ENCODE measurements at regions of chr1 and their contacts with region 1.

Region 1: DNA sequence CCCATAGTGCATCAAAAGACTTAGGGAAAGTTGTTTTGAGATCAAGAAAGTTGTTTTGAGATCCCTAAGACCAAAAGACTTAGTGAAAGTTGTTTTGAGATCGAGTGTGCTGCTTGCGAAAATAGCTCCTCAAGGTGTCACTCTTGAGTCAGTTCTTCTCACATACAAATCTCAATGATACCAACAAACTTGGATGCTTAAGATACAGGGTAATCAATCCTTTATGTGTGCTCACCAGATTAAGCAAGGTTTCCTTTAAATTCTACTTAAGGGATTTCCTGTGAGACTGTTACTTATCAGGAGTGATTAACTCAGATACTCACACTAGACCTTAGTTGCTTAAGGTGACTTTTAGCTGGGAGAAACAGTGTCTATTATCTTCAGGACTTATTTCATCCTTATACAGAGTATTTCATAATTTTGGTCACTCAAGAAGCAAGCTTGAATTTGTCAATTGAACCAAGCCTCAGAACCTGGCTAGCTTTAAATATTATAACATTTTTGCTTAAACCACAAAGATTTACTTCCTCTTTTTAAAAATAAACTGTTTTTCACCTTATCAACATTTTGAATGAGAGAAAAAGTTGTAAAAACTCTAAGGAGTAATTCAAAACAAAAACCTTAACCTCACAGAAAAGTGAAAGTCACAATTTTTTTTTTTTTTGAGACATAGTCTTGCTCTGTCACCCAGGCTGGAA is 8.0 kb upstream of the RLF start:
- DNase-seq: peak; percentile 48
- ATAC-seq: peak; percentile 86
- H3K4me3 Mint-ChIP-seq: no peak overlapping the region
- H3K27ac Mint-ChIP-seq: no peak overlapping the region
- H3K4me1 Mint-ChIP-seq: peaks cover 11% of the 10 kb centered on the region
- H3K27me3 Mint-ChIP-seq: peaks cover 4% of the 10 kb centered on the region

Region 2: GRCh38 chr1:40096977-40097782 is 56.0 kb before region 1 on chr1 and contains the start of gene PPT1:
- CTCF ChIA-PET with region 1: interaction called, 10 read pairs
- DNase-seq: peak; percentile 87
- ATAC-seq: peak; percentile 95
- H3K4me3 Mint-ChIP-seq: peak within 1 kb of the TSS; percentile 84
- H3K27ac Mint-ChIP-seq: peak within 1 kb of the TSS; percentile 89
- H3K4me1 Mint-ChIP-seq: peaks cover 38% of the 10 kb centered on the region
- H3K27me3 Mint-ChIP-seq: peaks cover 7% of the 10 kb centered on the region
- total RNA-seq, gene PPT1: 74.1 to 96.6 TPM

Region 3: DNA sequence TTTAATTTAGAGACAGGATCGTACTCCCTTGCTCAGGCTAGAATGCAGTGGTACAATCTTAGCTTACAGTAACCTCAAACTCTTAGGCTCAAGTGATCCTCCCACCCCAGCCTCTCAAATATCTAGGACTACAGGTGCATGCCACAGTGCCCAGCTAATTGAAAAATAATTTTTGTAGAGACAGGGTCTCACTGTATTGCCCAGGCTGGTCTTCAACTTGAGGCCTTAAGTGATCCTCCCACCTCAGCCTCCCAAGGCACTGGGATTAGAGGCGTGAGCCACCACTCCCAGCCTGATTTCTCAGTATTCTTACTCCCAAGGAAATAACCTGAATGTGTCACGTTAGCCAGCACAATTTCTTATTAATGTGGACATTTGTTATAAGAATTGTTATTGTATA is 17.8 kb after region 1 on chr1:
- CTCF ChIA-PET with region 1: interaction called, 12 read pairs
- DNase-seq: no peak
- ATAC-seq: no peak
- H3K4me3 Mint-ChIP-seq: no peak overlapping the region
- H3K27ac Mint-ChIP-seq: no peak overlapping the region
- H3K4me1 Mint-ChIP-seq: peaks cover 28% of the 10 kb centered on the region
- H3K27me3 Mint-ChIP-seq: no peaks in the 10 kb centered on the region

Region 4: GRCh38 chr1:40185951-40186864 is 33.0 kb after region 1 on chr1:
- CTCF ChIA-PET with region 1: interaction called, 10 read pairs
- DNase-seq: peak; percentile 81
- ATAC-seq: peak; percentile 97
- H3K4me3 Mint-ChIP-seq: peak overlapping the region; percentile 39
- H3K27ac Mint-ChIP-seq: peak overlapping the region; percentile 88
- H3K4me1 Mint-ChIP-seq: peaks cover 60% of the 10 kb centered on the region
- H3K27me3 Mint-ChIP-seq: no peaks in the 10 kb centered on the region

Region 5: GRCh38 chr1:40241362-40241761 is 88.1 kb after region 1 on chr1:
- CTCF ChIA-PET with region 1: interaction called, 10 read pairs
- DNase-seq: no peak
- ATAC-seq: peak; percentile 31
- H3K4me3 Mint-ChIP-seq: peak overlapping the region; percentile 8
- H3K27ac Mint-ChIP-seq: peak overlapping the region; percentile 83
- H3K4me1 Mint-ChIP-seq: peaks cover 55% of the 10 kb centered on the region
- H3K27me3 Mint-ChIP-seq: no peaks in the 10 kb centered on the region

Region 6: DNA sequence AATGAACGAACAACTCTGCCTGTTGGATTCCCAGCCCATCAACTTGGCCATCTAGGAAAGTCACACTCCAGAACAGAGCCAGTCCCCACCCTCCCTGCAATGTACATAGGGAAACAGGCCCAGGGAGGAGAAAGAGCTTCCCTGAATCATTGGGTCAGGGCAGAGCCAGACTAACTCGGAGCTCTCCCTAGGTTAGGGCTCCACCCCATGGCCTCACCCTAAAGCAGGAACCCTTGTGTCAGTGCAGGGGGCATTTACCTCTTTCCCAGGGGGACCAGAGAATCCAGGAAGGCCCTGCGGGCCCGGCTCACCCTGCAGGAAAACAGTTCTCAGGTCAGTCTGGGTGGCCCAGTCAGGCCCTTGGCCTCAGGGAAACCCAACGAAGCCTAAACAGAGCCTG is 152.2 kb after region 1 on chr1:
- CTCF ChIA-PET with region 1: interaction called, 16 read pairs
- DNase-seq: peak; percentile 47
- ATAC-seq: peak; percentile 49
- H3K4me3 Mint-ChIP-seq: no peak overlapping the region
- H3K27ac Mint-ChIP-seq: no peak overlapping the region
- H3K4me1 Mint-ChIP-seq: no peaks in the 10 kb centered on the region
- H3K27me3 Mint-ChIP-seq: no peaks in the 10 kb centered on the region

Region 7: GRCh38 chr1:40404670-40405462 is 251.6 kb after region 1 on chr1:
- CTCF ChIA-PET with region 1: interaction called, 11 read pairs
- DNase-seq: no peak
- ATAC-seq: peak; percentile 50
- H3K4me3 Mint-ChIP-seq: peak overlapping the region; percentile 4
- H3K27ac Mint-ChIP-seq: peak overlapping the region; percentile 82
- H3K4me1 Mint-ChIP-seq: peaks cover 54% of the 10 kb centered on the region
- H3K27me3 Mint-ChIP-seq: no peaks in the 10 kb centered on the region